Activated CD4-positive, alpha-beta T cell treated with anti-CD3 and anti-CD28 coated beads for 36 hours (primary cell): ENCODE measurements at regions of chr9 and their contacts with region 1.

Region 1: GRCh38 chr9:83707768-83708514 is at the start of gene UBQLN1:
- DNase-seq: peak; percentile 94
- ATAC-seq: peak; percentile 80
- H3K4me3 Mint-ChIP-seq: peak within 1 kb of the TSS; percentile 80
- H3K27ac Mint-ChIP-seq: peak within 1 kb of the TSS; percentile 100
- H3K4me1 Mint-ChIP-seq: peaks cover 40% of the 10 kb centered on the region
- H3K27me3 Mint-ChIP-seq: no peaks in the 10 kb centered on the region
- total RNA-seq, gene UBQLN1: 88.3 to 116 TPM

Region 2: GRCh38 chr9:83473488-83473971 is 234.4 kb before region 1 on chr9:
- CTCF ChIA-PET with region 1: no interaction called
- POLR2A ChIA-PET with region 1: no interaction called
- intact Hi-C with region 1: loop called in 1 of 2 experiments (anchors 5 kb)
- DNase-seq: peak; percentile 17
- ATAC-seq: peak; percentile 83
- H3K4me3 Mint-ChIP-seq: peak overlapping the region; percentile 20
- H3K27ac Mint-ChIP-seq: peak overlapping the region; percentile 72
- H3K4me1 Mint-ChIP-seq: peaks cover 27% of the 10 kb centered on the region
- H3K27me3 Mint-ChIP-seq: peaks cover 9% of the 10 kb centered on the region

Region 3: DNA sequence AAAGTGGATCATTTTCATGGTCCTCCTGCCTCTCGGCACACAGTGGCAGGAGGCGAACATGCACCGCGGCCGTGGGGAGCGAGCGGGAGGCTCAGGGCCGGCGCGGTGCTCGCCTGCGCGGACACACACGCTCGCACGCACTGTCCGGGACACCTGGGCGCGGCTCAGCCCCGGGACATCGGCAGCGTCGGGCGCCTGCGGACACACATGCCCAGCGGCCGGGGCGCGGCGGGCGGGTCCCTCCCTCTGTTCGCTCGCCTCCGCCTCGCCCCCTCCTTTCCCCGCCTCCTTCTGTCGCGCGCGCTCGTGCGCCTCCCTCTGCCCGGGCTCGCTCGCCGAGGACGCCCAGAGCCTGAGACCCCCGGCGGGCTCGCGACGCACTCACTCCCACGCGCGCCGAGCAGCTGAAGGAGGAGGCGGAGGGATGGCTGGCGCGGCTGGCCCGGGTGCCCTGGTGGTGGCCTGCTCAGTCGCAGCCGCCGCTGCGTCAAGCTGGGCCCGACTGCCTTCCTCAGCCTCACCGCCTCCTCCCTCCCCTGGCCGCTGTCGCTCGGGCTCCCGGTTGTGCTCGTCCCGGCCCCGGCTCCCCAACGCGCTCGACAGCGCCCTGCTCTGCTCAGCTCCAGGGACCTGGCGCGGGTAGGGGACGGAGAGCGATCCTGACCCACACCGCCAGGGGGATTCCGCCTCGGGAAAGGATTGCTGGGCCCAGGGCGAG is 169.6 kb before region 1 on chr9 and contains the start of gene FRMD3:
- CTCF ChIA-PET with region 1: no interaction called
- POLR2A ChIA-PET with region 1: no interaction called
- intact Hi-C with region 1: no loop called
- DNase-seq: peak; percentile 54
- ATAC-seq: peak; percentile 80
- H3K4me3 Mint-ChIP-seq: peak within 1 kb of the TSS; percentile 21
- H3K27ac Mint-ChIP-seq: no peak within 1 kb of the TSS
- H3K4me1 Mint-ChIP-seq: peaks cover 5% of the 10 kb centered on the region
- H3K27me3 Mint-ChIP-seq: peaks cover 28% of the 10 kb centered on the region
- total RNA-seq, gene FRMD3: 0.35 to 0.46 TPM

Region 4: GRCh38 chr9:83622939-83623678 is 84.8 kb before region 1 on chr9 and contains the start of gene IDNK:
- CTCF ChIA-PET with region 1: interaction called, 6 read pairs
- POLR2A ChIA-PET with region 1: interaction called, 4 read pairs
- intact Hi-C with region 1: loop called (anchors 1 kb)
- DNase-seq: peak; percentile 77
- ATAC-seq: peak; percentile 89
- H3K4me3 Mint-ChIP-seq: peak within 1 kb of the TSS; percentile 80
- H3K27ac Mint-ChIP-seq: peak within 1 kb of the TSS; percentile 98
- H3K4me1 Mint-ChIP-seq: peaks cover 23% of the 10 kb centered on the region
- H3K27me3 Mint-ChIP-seq: no peaks in the 10 kb centered on the region
- total RNA-seq, gene IDNK: 4.6 to 4.7 TPM

Region 5: DNA sequence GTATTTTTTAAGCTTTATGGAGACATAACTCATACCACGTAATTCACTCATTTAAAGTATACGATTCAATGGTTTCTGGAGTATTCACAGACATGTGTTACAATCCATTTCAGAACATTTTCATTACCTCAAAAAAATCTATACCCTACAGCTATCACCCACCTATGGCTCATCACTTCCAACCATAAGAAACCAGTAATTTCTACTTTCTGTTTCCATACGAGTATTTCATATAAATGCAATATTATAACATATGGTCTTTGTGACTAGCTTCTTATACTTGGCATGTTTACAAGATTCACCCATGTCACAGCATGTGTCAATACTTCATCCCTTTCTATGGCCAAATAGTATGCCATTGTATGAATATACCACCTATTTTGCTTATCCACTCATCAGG is 19.0 kb before region 1 on chr9:
- CTCF ChIA-PET with region 1: interaction called, 4 read pairs
- POLR2A ChIA-PET with region 1: interaction called, 9 read pairs
- intact Hi-C with region 1: loop called (anchors 1 kb)
- DNase-seq: no peak
- ATAC-seq: peak; percentile 89
- H3K4me3 Mint-ChIP-seq: no peak overlapping the region
- H3K27ac Mint-ChIP-seq: peak overlapping the region; percentile 61
- H3K4me1 Mint-ChIP-seq: peaks cover 71% of the 10 kb centered on the region
- H3K27me3 Mint-ChIP-seq: no peaks in the 10 kb centered on the region

Region 6: DNA sequence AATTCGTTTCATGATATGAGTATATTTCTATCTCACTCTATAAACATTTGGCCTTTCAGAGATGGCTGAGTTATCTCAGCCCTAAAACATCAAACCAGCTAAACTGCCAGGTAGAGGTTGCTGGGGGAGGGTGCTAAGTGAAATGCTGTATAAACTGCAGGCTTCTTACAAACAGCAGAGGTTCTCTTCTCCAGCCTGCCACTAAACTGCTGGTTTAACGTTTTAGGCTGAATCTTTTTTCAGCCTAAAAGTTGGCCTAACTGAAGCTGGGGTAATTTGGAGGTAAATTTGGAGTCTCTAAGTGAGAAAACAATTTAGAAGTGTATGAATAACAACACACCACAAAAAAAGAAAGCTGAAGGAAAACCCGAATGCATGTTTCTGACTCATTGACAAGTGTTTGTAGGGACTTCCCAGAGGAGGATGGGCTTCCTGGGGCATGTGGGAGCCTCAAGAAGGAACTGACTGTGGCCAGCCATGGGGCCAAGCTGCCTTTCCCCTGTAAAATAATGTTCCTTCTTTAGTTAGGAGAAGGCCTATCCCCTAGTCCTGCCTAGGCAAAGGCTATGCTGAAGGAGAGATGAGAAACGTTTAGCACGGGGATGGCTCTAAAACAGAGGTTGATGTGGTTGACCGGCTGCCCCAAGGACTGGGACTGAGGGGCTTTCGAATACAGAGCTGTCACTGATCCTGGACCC is 588.4 kb after region 1 on chr9:
- CTCF ChIA-PET with region 1: no interaction called
- POLR2A ChIA-PET with region 1: interaction called, 4 read pairs
- intact Hi-C with region 1: loop called in 1 of 2 experiments (anchors 1 kb)
- DNase-seq: peak; percentile 79
- ATAC-seq: peak; percentile 82
- H3K4me3 Mint-ChIP-seq: peak overlapping the region; percentile 46
- H3K27ac Mint-ChIP-seq: peak overlapping the region; percentile 98
- H3K4me1 Mint-ChIP-seq: peaks cover 60% of the 10 kb centered on the region
- H3K27me3 Mint-ChIP-seq: no peaks in the 10 kb centered on the region